SK-N-SH (cell line): ENCODE measurements at regions of chr11 and their contacts with region 1.

Region 1: DNA sequence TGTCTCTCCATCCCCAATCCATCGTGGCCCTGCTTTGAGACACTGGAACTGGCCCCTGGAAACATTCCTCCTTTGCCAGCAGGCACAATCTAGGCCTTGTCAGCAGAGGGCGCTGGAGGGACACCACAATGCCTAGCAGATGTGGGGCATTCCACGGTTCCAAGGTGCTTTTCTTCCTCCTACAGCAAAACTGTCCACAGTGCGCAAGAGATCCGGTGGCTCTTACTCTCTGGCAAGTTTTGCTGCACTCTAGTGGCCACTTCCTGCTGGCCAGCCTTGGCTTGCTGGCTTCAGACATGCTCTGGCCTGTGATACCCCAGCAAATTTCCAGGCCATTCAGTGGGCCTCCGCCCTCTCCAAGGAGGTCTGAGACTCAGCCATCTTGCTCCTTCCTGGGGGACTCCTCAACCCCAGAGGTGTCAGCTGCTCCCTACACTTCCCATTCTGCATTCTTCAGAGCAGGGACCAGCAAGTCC is 17.1 kb upstream of the RBM4B start:
- DNase-seq: peak; percentile 89
- H3K4me3 ChIP-seq: no peak overlapping the region; a peak in 1 of 4 replicates
- H3K27ac ChIP-seq: peak overlapping the region in 1 of 2 experiments; percentile 11; a peak in 2 of 4 replicates
- H3K4me1 ChIP-seq: no peaks in the 10 kb centered on the region
- H3K27me3 ChIP-seq: no peaks in the 10 kb centered on the region
- CTCF ChIP-seq: peak; percentile 98
- EP300 ChIP-seq: no peak
- RAD21 ChIP-seq: peak; percentile 89

Region 2: DNA sequence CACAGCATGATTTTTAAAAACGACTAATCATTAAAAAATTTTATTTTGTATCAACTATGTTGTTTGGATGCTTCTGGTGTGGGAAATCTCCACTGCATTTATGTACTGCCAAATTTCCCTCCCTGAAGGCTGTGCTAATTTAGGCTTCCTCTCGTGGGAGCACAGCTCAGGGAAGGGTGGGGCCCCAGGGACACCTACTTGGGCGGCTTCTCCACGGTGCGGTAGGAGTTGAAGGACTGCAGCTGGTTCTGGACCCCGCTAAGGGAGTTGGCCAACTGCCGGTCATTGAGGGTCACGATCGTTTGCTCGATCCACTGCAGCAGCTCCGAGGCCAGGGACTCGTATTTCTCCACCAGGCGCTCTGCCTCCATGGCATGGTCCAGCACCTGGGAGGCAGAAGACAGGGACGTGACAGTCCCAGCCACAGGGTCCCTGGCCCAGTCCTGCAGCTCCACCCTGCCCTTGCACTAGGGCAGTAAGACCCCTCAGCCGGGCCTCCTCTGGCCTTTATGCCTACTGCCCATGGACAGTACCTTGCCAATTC is 15.7 kb after region 1 on chr11:
- CTCF ChIA-PET with region 1: interaction called, 11 read pairs
- POLR2A ChIA-PET with region 1: interaction called, 3 read pairs
- DNase-seq: no peak
- H3K4me3 ChIP-seq: no peak overlapping the region
- H3K27ac ChIP-seq: no peak overlapping the region
- H3K4me1 ChIP-seq: no peaks in the 10 kb centered on the region
- H3K27me3 ChIP-seq: no peaks in the 10 kb centered on the region
- CTCF ChIP-seq: no peak
- EP300 ChIP-seq: no peak
- RAD21 ChIP-seq: no peak

Region 3: DNA sequence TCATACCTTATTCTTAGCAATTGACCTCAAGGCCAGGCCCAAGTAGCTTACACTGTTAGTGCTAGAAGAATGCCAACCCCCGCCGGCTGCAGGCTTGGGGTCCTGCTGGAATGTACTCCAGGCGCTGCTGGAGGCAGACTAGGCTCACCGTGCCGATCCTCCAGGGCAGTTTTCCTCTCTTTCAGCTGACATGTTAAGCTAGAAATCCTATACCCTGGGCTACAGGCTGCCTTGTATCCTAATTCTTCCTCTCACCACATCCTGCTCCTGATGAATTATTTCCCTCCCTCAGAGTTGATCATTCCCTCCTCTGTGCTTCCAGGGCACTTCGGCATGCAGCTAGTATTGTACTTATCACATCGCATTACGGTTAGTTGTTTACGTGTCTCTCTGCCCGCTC is 30.9 kb after region 1 on chr11:
- CTCF ChIA-PET with region 1: interaction called, 10 read pairs
- POLR2A ChIA-PET with region 1: interaction called, 3 read pairs
- DNase-seq: no peak
- H3K4me3 ChIP-seq: no peak overlapping the region
- H3K27ac ChIP-seq: no peak overlapping the region
- H3K4me1 ChIP-seq: peaks cover under 1 to 26% of the 10 kb centered on the region in 2 experiments; a peak in 2 of 4 replicates
- H3K27me3 ChIP-seq: no peaks in the 10 kb centered on the region
- CTCF ChIP-seq: no peak
- EP300 ChIP-seq: no peak
- RAD21 ChIP-seq: no peak

Region 4: DNA sequence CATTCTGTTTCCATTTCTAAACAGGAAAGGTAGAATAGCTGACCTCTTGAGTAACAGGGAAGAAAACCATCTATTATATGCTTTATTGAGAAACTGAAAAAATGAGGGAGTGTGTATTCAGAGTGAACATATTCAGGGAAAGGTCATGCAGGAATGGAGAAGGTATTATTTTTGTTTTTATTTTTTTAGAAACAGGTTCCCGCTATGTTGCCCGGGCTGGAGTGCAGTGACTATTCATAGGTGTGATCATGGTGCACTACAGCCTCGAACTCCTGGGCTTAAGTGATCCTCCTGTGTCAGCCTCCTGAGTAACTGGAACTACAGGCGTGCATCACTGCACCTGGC is 139.7 kb after region 1 on chr11:
- CTCF ChIA-PET with region 1: interaction called, 52 read pairs
- POLR2A ChIA-PET with region 1: no interaction called
- DNase-seq: no peak
- H3K4me3 ChIP-seq: no peak overlapping the region
- H3K27ac ChIP-seq: no peak overlapping the region
- H3K4me1 ChIP-seq: peaks cover 0 to 5% of the 10 kb centered on the region in 2 experiments; a peak in 1 of 4 replicates
- H3K27me3 ChIP-seq: no peaks in the 10 kb centered on the region
- CTCF ChIP-seq: no peak
- EP300 ChIP-seq: no peak
- RAD21 ChIP-seq: no peak

Region 5: GRCh38 chr11:66889974-66890373 is 195.2 kb after region 1 on chr11:
- CTCF ChIA-PET with region 1: no interaction called
- POLR2A ChIA-PET with region 1: no interaction called
- DNase-seq: no peak
- H3K4me3 ChIP-seq: no peak overlapping the region
- H3K27ac ChIP-seq: no peak overlapping the region
- H3K4me1 ChIP-seq: peaks cover 3 to 15% of the 10 kb centered on the region in 2 experiments; a peak in 2 of 4 replicates
- H3K27me3 ChIP-seq: no peaks in the 10 kb centered on the region
- CTCF ChIP-seq: no peak
- EP300 ChIP-seq: no peak
- RAD21 ChIP-seq: no peak

Region 6: GRCh38 chr11:66915046-66915832 is 220.5 kb after region 1 on chr11:
- CTCF ChIA-PET with region 1: no interaction called
- POLR2A ChIA-PET with region 1: no interaction called
- DNase-seq: no peak
- H3K4me3 ChIP-seq: no peak overlapping the region
- H3K27ac ChIP-seq: no peak overlapping the region
- H3K4me1 ChIP-seq: peaks cover 0 to 5% of the 10 kb centered on the region in 2 experiments; a peak in 1 of 4 replicates
- H3K27me3 ChIP-seq: no peaks in the 10 kb centered on the region
- CTCF ChIP-seq: no peak
- EP300 ChIP-seq: no peak
- RAD21 ChIP-seq: no peak